ENCODE measurements at regions of chr5 and their contacts with region 1.

Region 1: DNA sequence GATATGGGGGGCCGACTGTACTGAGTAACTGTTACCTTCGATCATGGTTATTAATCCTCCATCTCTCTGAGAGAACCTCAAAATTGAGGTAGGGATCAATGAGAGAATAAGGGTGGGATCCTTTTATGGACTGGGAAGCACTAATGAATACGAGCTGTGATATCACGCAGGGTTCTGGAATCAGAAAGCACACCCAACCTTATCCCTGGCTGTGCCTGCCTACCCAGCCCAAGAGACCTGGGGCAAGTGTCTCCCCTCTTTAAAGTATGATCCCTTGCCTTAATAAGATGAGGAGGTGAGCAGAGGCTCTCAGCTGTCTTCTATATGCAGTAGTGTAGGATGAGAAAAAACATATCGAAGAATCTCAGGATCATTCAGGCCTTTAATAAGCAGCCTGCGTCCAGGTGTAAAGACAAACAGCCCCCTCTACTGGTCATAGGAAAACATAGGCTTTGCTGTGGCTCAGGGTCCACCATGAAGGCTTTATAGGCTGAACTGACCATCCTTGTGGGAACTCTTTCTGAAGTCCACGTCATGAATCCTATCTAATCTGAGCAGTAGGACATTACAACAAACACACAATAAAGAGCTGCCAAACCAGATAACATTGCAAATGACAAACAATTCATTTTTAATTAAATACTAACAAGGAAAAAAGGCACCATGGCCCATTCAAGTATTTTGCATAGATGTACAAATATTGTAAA is 16.8 kb downstream of the NIPAL4 start:
- DNase-seq: no peak
- H3K4me3 ChIP-seq: no peak overlapping the region
- H3K27ac ChIP-seq: peak overlapping the region; percentile 60 to 81 (median 74)
- H3K4me1 ChIP-seq: peaks cover 8 to 32% (median 19%) of the 10 kb centered on the region in 4 donors
- H3K27me3 ChIP-seq: no peaks in the 10 kb centered on the region
- CTCF ChIP-seq: peak; percentile 74 to 76 (median 75)
- EP300 ChIP-seq: no peak
- POLR2A ChIP-seq: no peak

Region 2: GRCh38 chr5:157328277-157328912 is 148.5 kb before region 1 on chr5:
- in situ Hi-C with region 1: loop called in 2 of 4 experiments (anchors 10 kb)
- intact Hi-C with region 1: no loop called
- DNase-seq: peak; percentile 58
- H3K4me3 ChIP-seq: peak overlapping the region in 3 of 4 donors; percentile 8 to 12 (median 11)
- H3K27ac ChIP-seq: peak overlapping the region; percentile 4 to 70 (median 25)
- H3K4me1 ChIP-seq: peaks cover 0 to 9% (median 5%) of the 10 kb centered on the region in 4 donors
- H3K27me3 ChIP-seq: no peaks in the 10 kb centered on the region
- CTCF ChIP-seq: peak; percentile 86 to 92 (median 90)
- EP300 ChIP-seq: no peak
- POLR2A ChIP-seq: no peak

Region 3: GRCh38 chr5:157335534-157336422 is 141.1 kb before region 1 on chr5:
- in situ Hi-C with region 1: loop called in 1 of 4 experiments (anchors 10 kb)
- intact Hi-C with region 1: no loop called
- DNase-seq: no peak
- H3K4me3 ChIP-seq: no peak overlapping the region
- H3K27ac ChIP-seq: peak overlapping the region; percentile 5 to 49 (median 41)
- H3K4me1 ChIP-seq: no peaks in the 10 kb centered on the region
- H3K27me3 ChIP-seq: no peaks in the 10 kb centered on the region
- CTCF ChIP-seq: no peak
- EP300 ChIP-seq: no peak
- POLR2A ChIP-seq: no peak

Region 4: DNA sequence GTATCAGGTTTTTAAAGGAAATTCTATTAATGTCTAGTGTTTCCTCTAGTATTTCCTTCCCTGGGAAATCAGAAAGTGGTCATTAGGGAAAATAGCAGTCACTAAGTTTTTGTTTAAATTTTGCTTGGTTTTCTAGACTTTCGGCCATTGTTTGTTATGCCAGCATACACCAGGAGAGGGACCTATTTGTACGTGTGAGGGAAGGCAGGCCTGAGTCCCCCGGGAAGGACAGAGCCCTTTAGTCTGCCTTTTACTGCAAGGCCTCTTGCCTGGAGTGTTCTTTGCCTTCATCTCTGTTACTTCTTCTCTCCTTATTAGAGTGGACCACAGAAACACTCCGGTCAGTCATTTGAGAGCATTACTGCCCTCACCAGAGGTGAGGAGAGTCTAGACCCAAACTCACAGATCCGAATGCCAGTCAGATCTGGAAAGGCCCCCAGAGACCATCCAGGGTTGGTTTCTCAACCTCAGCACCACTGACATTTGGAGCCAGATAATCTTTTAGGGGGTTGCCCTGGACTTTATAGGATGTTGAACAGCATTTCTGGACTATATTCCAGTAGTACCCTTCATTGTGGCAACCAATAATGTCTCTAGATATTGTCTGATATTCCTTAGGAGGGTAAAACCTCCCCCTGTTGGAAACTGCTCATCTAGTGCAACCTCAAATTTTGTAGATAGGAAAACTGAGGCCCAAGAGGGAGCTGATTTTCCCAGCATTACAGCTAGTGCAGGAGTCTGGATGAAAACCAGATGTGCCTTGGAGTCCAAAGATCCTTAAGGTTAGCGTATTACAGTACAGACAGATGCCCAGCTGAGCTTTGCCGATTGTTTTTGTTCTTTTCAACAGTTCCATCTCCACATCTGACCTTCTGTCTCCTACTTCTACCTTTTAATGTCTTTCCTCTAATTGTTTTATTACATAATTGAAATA is 109.8 kb before region 1 on chr5:
- in situ Hi-C with region 1: no loop called
- intact Hi-C with region 1: loop called (anchors 10 kb)
- DNase-seq: no peak
- H3K4me3 ChIP-seq: no peak overlapping the region
- H3K27ac ChIP-seq: peak overlapping the region; percentile 56 to 80 (median 72)
- H3K4me1 ChIP-seq: peaks cover 0 to 18% (median 0%) of the 10 kb centered on the region in 4 donors
- H3K27me3 ChIP-seq: no peaks in the 10 kb centered on the region
- CTCF ChIP-seq: peak; percentile 23 to 52 (median 32)
- EP300 ChIP-seq: no peak
- POLR2A ChIP-seq: no peak

Region 5: GRCh38 chr5:157431544-157432200 is 45.2 kb before region 1 on chr5:
- in situ Hi-C with region 1: no loop called
- intact Hi-C with region 1: loop called (anchors 2 kb)
- DNase-seq: peak; percentile 23
- H3K4me3 ChIP-seq: no peak overlapping the region
- H3K27ac ChIP-seq: no peak overlapping the region
- H3K4me1 ChIP-seq: peaks cover 0 to 9% (median 0%) of the 10 kb centered on the region in 4 donors
- H3K27me3 ChIP-seq: no peaks in the 10 kb centered on the region
- CTCF ChIP-seq: peak; percentile 51 to 69 (median 52)
- EP300 ChIP-seq: no peak
- POLR2A ChIP-seq: no peak

Region 6: GRCh38 chr5:157718519-157718918 is 241.7 kb after region 1 on chr5:
- in situ Hi-C with region 1: loop called in 1 of 4 experiments (anchors 25 kb)
- intact Hi-C with region 1: no loop called
- DNase-seq: no peak
- H3K4me3 ChIP-seq: no peak overlapping the region
- H3K27ac ChIP-seq: peak overlapping the region in 2 of 4 donors; percentile 34
- H3K4me1 ChIP-seq: peaks cover 0 to 12% (median 9%) of the 10 kb centered on the region in 4 donors
- H3K27me3 ChIP-seq: no peaks in the 10 kb centered on the region
- CTCF ChIP-seq: peak; percentile 53 to 86 (median 59)
- EP300 ChIP-seq: no peak
- POLR2A ChIP-seq: no peak

Measured in transverse colon (tissue), 4 donors.